Posterior cingulate gyrus (tissue), 11 donors: ENCODE measurements at regions of chr16 and their contacts with region 1.

Region 1: DNA sequence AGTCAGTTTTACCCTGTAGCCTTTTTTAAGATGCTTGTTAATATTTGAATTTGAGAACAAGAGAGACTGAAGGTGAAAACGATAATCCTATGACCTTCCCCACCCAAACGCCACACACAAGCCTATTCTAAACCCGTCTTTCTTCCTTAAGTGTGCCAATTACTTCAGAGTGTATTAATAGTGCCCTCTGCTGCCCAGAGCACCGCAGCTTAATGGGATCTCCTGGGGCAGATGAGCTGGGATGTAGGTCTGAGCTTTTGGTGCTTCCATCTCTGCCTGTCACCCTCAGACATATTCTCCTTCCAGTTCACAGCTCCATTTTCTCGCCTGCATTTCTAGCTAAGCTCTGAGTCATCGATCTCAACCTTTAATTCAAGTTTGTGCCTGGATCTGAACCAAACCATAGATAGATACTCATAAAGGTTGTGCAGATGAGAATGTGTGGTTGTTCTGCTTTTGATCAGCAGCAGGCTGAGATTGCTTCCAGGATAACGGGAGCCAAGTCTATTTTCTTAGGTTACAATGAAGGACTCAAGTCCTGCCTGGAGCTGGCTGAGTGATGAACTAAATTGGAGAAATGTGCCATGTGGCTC is 46.4 kb upstream of the CDH13 start:
- DNase-seq: peak in 6 of 10 donors; percentile 18 to 90 (median 58)

Region 2: DNA sequence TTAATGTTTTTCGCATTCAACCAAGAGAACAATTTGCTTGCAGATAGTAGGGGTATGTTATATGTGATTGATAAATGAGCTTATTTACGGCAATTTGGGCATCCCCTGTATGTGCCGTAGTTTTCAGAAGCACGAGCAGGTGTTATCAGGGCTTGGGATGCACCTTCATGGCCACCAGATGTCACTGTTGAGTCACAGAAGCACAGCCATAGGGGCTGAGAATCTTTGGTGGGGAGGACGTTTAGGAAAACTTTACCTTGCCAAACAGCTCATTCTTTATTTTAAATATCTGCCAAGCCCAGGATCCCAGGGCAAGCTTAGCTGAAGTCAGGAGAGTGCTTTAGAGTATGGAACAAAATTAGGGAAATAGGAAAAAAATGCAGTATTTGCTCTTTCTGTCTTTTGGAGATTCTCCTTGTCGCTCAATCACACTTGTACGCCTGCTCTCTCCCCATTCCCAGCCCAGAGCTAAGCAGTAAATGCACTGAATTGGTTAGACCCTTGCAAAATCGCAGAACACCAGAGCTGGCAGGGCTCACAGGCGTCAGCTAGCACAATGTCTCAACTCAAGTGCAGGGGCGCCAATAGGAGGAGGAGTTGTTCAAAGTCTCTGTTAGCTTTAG is 316.8 kb before region 1 on chr16:
- intact Hi-C with region 1: loop called (anchors 2 kb)
- DNase-seq: peak; percentile 26 to 94 (median 74)

Region 3: GRCh38 chr16:82368041-82368440 is 212.4 kb before region 1 on chr16:
- intact Hi-C with region 1: loop called (anchors 2 kb)
- DNase-seq: peak in 7 of 10 donors; percentile 31 to 93 (median 52)

Region 4: DNA sequence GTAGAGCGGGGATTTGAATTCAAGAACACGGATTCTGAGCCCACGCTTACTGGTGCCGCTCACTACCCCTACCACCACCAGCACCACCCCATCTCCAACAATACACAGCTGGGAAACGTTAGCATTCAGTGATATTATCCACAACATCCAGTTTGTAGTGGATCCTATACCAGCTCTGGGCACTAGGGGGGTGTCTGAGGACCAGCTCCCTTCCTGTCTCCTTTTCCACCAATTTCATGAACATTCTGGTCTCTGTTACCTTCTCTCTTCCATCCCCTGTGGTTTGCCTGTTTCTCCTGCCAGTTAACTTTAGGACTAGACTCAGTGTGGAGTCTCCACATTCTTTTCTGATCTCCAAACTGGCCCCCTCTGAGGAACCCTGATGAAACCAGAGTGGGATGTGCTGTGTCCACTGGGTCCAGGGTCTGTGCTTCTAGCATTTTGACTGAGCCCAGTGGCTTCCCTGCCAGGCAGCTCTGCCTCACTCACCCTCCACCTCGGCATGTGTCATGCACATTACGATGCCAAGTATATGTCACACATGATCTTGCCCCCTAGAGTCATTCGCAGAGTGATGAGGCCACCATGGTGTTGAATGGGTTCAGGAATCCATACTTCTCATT is 140.6 kb before region 1 on chr16:
- intact Hi-C with region 1: loop called (anchors 10 kb)
- DNase-seq: no peak

Region 5: DNA sequence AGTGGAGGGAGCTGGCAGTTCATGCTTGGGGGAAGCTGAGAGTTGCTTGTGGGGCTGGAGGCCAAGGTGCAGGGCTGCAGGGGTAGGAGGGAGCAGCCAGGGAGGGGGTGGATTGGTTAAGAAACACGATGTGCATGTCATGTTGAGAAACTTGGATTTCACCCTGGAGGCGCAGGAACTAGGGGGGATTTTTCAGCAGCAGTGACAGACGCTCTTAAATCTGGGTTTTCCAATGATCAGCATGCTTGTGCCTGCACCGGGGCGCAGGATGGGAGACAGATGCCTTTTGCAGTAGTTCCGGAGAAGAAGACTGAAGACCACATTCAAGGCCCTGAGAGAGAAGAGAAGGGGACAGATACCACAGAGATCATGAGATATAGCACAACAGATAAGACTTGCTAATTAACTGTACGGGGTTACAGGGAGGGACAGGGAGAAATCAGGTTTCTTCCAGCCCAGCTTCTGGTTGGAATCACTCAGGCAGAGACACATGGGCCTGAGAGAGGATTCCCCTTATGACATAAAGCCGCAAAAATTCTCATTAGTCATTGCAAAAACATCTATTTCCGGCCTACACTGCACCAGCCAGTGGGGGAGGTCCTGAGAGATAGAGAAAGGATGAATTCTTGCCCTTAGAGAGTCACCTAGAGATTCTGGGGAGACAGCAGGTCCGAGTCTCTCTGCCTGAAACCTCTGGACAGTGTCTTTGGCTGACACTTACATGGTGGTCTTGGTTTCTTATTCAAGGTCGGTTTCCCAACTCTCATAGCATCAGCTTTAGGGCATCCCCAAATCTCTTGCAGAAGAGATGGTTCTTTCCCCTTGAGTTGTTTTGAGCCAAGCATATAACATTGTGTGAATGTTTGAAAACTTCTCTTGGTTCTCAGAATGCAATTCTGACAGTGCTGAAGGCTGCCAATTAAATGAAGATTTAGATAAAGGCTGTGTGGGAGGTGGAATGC is 73.4 kb after region 1 on chr16:
- intact Hi-C with region 1: no loop called
- DNase-seq: peak in 1 of 10 donors; percentile 56

Region 6: DNA sequence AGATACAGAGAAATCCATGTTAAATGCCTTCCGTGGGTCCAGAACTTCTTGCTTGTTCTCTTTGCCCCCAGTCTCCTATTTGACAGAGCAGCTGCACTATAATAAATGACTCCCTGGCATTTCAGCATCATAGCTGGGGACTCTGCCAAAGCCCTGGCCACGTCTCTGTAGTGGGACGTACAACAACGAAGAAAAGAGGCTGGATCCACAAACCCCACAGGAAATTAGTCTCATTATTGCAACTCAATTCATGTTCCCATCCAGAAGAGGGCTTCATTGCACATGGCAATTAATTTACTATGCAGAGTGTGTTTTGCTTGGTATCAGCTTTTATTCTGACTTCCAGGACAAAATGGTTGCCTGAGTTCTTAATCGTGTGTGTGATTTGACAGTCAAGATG is 167.6 kb after region 1 on chr16:
- intact Hi-C with region 1: no loop called
- DNase-seq: no peak